WTC11 (cell line): ENCODE measurements at regions of chr2 and their contacts with region 1.

Region 1: DNA sequence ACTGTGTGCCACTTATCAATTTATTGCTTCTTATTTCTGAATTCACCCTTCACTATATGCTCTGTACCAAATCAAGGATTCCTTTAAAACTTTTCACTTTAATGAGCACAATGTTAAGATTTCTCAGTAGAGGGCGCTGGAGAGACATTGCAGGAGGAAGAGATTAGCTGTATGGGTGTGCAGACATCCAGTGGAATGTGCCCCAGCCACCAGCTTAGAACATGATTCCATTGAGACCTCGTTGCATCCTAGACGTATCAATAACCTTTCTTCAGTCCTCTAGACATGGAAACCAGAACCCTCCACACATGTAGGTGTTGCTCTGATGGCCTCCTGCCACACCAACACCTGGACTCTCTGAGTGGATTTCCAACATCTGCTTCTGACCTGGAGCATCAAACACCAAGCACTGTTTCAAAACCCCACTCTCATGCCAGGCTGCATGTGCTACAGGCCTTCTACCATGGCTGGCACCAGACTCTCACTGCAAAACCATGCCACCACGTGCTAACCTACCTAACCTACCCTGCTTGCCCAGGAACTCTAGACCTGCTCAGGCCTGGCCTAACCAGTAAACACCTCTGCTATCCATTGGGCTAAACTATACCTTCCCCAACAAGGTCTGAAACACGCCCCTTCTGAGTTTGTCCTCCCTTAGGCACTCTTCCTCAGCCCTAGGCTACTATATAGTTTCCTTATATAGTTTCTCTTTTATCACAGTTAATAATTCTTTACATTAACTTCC is 633.2 kb upstream of the PKDCC start:
- DNase-seq: peak; percentile 21
- ATAC-seq: peak; percentile 97
- H3K4me3 Mint-ChIP-seq: no peak overlapping the region
- H3K27ac Mint-ChIP-seq: no peak overlapping the region
- H3K4me1 Mint-ChIP-seq: no peaks in the 10 kb centered on the region
- H3K27me3 Mint-ChIP-seq: no peaks in the 10 kb centered on the region
- CTCF ChIP-seq: peak; percentile 57

Region 2: DNA sequence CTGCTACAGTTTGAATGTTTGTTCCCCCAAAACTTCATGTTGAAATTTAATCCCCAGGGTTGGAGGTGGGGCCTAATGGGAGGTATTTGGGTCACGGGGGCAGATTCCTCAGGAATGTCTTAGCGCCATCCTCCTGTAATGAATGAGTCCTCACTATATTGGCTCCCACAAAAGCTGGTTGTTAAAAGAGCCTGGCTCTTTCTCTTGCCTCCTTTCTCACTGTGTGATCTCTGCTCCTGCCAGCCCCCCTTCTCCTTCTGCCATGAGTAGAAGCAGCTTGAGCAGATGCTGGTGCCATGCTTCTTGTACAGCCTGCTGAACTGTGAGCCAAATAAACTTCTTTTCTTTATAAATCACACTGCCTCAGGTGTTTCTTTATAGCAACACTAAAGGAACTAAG is 87.8 kb before region 1 on chr2:
- CTCF ChIA-PET with region 1: no interaction called
- POLR2A ChIA-PET with region 1: no interaction called
- DNase-seq: no peak
- ATAC-seq: peak; percentile 93
- H3K4me3 Mint-ChIP-seq: no peak overlapping the region
- H3K27ac Mint-ChIP-seq: 0 out of 2 replicates have a peak overlapping the region, but pooled peaks have one; percentile 70
- H3K4me1 Mint-ChIP-seq: peaks cover 8% of the 10 kb centered on the region
- H3K27me3 Mint-ChIP-seq: no peaks in the 10 kb centered on the region
- CTCF ChIP-seq: no peak

Region 3: GRCh38 chr2:41400088-41400665 is 14.5 kb before region 1 on chr2:
- CTCF ChIA-PET with region 1: interaction called, 16 read pairs
- POLR2A ChIA-PET with region 1: no interaction called
- DNase-seq: peak; percentile 46
- ATAC-seq: peak; percentile 87
- H3K4me3 Mint-ChIP-seq: no peak overlapping the region
- H3K27ac Mint-ChIP-seq: no peak overlapping the region
- H3K4me1 Mint-ChIP-seq: peaks cover 27% of the 10 kb centered on the region
- H3K27me3 Mint-ChIP-seq: 0 out of 2 replicates have a peak, but pooled peaks cover 4% of the 10 kb centered on the region
- CTCF ChIP-seq: no peak

Region 4: DNA sequence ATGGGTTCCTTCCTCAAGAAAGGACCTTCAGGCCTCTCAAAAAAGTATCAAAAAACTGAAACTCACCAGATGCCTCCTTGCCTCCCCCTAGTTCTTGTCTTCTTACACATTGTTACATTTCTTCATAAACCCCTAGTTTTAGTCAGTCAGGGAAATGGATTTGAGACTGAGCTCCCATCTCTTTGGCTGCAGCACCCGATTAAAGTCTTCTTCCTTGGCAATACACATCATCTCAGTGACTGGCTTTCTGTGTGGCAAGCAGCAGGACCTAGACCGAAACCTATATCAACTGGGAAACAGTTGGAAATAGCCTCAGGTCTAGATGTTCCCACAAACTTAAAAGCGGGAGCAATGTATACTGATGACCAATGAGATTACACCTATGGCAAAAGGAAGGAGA is 120.9 kb after region 1 on chr2:
- CTCF ChIA-PET with region 1: no interaction called
- POLR2A ChIA-PET with region 1: no interaction called
- DNase-seq: no peak
- ATAC-seq: no peak
- H3K4me3 Mint-ChIP-seq: no peak overlapping the region
- H3K27ac Mint-ChIP-seq: no peak overlapping the region
- H3K4me1 Mint-ChIP-seq: no peaks in the 10 kb centered on the region
- H3K27me3 Mint-ChIP-seq: no peaks in the 10 kb centered on the region
- CTCF ChIP-seq: no peak